Posterior cingulate gyrus (tissue), 11 donors: ENCODE measurements at regions of chr12 and their contacts with region 1.

Region 1: DNA sequence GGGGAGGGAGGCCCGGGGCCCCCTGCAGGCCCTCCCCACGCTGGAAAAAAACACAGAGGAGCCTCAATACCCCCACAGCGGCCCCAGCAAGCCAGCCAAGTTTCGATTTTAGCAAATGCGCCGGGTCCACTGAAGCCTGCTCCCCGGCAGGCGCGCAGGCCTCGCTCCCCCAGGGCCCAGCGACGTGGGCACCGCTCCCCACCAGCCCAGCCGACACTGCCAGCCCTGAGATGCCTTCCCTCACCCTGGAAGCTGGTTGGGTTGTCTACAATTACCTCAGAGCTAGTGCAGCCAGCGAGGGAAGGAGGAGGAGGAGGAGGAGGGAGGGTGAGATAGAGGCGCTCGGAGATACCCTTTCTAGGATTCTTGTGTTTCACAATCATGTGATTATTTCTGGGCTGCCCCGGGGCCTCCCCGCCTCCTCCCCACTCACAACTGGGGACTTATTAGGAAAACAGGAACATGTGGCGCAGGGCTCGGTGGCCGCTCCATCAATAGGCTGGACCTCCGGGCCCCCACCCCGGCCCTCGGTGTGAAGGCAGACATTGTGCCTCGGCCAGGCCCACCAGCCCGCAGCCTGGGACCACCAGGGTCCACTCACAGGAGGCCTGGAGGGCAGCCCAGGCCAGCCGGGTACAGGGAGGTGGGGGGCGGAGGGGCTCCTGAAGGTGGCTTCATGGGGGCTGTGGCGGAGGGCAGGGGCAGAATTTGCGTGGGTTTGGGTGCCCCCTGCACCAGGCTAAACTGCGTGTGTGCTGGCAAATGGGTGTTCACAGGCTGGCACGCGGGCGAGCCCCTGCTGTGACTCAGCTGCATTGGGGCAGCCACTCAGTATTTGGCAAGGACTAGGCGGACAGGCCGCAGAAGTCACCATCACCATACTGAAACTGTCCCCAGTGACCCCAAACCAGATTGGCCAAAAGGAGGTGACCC is 109.9 kb downstream of the NCOR2 start:
- DNase-seq: peak; percentile 65 to 95 (median 72)

Region 2: GRCh38 chr12:124388679-124389536 is 68.6 kb before region 1 on chr12:
- intact Hi-C with region 1: loop called (anchors 5 kb)
- DNase-seq: peak; percentile 82 to 98 (median 86)

Region 3: DNA sequence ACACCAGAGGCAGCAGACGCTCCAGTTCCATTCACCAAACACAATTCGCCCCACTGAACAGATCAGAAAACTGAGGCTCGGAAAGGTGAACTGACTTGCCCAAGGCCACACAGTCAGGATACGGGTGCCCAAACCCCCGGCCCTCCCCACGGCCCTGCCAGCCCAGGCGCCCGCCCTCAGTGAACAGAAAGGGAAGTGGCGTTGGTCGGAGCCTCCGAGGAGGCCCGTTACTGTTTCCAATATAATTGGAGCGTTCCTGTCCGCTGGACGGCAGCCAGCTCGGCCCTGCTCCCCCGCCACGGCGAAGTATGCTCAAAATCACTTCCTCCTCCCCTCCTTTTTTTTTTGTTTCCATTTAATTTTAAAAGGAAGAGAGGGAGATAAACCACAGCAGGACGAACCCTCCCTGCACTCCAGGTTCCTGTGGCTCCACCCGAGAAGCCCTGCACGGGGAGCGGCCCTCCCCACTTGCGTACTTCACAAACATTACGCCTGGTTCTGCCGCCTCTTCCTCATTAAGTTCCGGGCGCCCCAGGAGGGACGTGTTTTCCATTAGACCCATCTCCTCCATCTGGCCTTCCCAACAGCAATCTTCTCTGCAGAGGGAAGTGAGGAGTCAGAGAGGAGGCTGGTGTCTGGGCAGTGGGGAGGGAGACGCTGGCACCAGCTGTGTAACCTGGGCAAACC is 48.7 kb after region 1 on chr12:
- intact Hi-C with region 1: loop called (anchors 5 kb)
- DNase-seq: peak in 1 of 10 donors; percentile 84